Heart left ventricle (tissue), 16 donors: ENCODE measurements at regions of chr7 and their contacts with region 1.

Region 1: GRCh38 chr7:22586786-22587140 is 86.8 kb upstream of the STEAP1B start:
- DNase-seq: no peak
- ATAC-seq: peak in 2 of 4 donors; percentile 32 to 34
- H3K4me3 ChIP-seq: no peak overlapping the region
- H3K27ac ChIP-seq: peak overlapping the region in 6 of 12 donors; percentile 1 to 28 (median 18)
- H3K4me1 ChIP-seq: peaks cover 0 to 78% (median 56%) of the 10 kb centered on the region in 12 donors
- H3K27me3 ChIP-seq: no peaks in the 10 kb centered on the region
- CTCF ChIP-seq: peak in 10 of 12 donors; percentile 18 to 57 (median 37)
- POLR2A ChIP-seq: no peak

Region 2: DNA sequence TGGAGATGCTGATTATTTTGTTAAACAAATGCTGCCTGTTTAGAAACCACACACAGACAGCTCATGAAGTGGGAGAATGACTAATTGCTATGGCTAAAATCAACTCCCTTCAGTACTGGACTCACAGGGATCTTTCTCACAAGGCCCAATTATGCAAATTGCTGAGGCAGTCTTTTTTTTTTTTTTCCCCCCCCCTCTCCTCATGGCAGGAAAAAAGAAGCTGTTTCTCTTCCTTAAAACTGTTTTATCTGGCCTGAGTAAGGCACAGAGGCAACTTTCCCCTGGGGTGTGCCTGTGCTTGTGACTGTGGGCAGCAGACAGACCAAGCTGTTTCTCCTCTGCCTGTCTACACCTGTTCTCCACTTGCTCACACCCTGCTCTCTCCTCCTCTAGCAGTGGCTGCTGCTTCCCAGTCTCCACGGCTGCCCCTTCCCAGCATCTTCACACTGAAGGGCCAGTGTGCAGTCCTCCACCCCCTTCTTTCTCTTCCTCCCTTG is 21.4 kb before region 1 on chr7:
- intact Hi-C with region 1: loop called in 2 of 10 experiments (anchors 2 kb)
- DNase-seq: peak in 3 of 5 donors; percentile 43 to 68 (median 55)
- ATAC-seq: peak in 3 of 4 donors; percentile 19 to 51 (median 27)
- H3K4me3 ChIP-seq: peak overlapping the region in 1 of 12 donors; percentile 5
- H3K27ac ChIP-seq: peak overlapping the region; percentile 18 to 81 (median 71)
- H3K4me1 ChIP-seq: peaks cover 7 to 71% (median 48%) of the 10 kb centered on the region in 12 donors
- H3K27me3 ChIP-seq: peaks cover 0 to 4% (median 0%) of the 10 kb centered on the region in 9 donors
- CTCF ChIP-seq: no peak
- POLR2A ChIP-seq: no peak

Region 3: GRCh38 chr7:22651534-22652243 is 64.9 kb after region 1 on chr7:
- intact Hi-C with region 1: loop called in 1 of 10 experiments (anchors 10 kb)
- DNase-seq: no peak
- ATAC-seq: peak in 1 of 4 donors; percentile 28
- H3K4me3 ChIP-seq: no peak overlapping the region
- H3K27ac ChIP-seq: peak overlapping the region in 4 of 12 donors; percentile 1 to 40 (median 12)
- H3K4me1 ChIP-seq: peaks cover 0 to 20% (median 0%) of the 10 kb centered on the region in 12 donors
- H3K27me3 ChIP-seq: no peaks in the 10 kb centered on the region
- CTCF ChIP-seq: no peak
- POLR2A ChIP-seq: no peak

Region 4: DNA sequence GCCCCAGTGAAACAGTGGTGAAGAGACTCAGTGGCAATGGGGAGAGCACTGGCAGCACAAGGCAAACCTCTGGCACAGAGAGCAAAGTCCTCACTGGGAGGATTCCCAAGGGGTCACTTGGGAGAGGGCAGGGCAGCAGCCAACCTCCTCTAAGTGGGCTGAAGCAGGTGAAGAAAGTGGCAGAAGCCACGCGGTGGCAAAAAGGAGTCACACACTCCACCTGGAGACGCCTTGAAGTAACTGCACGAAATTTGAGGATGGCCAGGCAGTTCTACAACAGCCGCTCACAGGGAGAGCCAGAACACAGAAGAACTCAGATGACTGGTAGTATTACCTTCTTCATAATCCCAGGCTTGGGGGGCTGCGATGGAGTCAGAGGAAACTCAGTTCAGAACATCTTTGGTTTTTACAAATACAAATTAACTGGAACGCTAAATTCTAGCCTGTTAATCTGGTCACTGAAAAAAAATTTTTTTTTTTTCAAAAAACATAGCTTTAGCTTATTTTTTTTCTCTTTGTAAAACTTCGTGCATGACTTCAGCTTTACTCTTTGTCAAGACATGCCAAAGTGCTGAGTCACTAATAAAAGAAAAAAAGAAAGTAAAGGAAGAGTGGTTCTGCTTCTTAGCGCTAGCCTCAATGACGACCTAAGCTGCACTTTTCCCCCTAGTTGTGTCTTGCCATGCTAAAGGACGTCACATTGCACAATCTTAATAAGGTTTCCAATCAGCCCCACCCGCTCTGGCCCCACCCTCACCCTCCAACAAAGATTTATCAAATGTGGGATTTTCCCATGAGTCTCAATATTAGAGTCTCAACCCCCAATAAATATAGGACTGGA is 139.8 kb after region 1 on chr7:
- intact Hi-C with region 1: loop called in 4 of 10 experiments (anchors 5 kb)
- DNase-seq: peak in 4 of 5 donors; percentile 31 to 56 (median 42)
- ATAC-seq: peak; percentile 29 to 72 (median 52)
- H3K4me3 ChIP-seq: peak overlapping the region; percentile 3 to 57 (median 45)
- H3K27ac ChIP-seq: peak overlapping the region; percentile 19 to 85 (median 70)
- H3K4me1 ChIP-seq: peaks cover 4 to 78% (median 40%) of the 10 kb centered on the region in 12 donors
- H3K27me3 ChIP-seq: no peaks in the 10 kb centered on the region
- CTCF ChIP-seq: peak; percentile 27 to 61 (median 46)
- POLR2A ChIP-seq: no peak